Endothelial cell of umbilical vein (primary cell): ENCODE measurements at regions of chr4 and their contacts with region 1.

Region 1: DNA sequence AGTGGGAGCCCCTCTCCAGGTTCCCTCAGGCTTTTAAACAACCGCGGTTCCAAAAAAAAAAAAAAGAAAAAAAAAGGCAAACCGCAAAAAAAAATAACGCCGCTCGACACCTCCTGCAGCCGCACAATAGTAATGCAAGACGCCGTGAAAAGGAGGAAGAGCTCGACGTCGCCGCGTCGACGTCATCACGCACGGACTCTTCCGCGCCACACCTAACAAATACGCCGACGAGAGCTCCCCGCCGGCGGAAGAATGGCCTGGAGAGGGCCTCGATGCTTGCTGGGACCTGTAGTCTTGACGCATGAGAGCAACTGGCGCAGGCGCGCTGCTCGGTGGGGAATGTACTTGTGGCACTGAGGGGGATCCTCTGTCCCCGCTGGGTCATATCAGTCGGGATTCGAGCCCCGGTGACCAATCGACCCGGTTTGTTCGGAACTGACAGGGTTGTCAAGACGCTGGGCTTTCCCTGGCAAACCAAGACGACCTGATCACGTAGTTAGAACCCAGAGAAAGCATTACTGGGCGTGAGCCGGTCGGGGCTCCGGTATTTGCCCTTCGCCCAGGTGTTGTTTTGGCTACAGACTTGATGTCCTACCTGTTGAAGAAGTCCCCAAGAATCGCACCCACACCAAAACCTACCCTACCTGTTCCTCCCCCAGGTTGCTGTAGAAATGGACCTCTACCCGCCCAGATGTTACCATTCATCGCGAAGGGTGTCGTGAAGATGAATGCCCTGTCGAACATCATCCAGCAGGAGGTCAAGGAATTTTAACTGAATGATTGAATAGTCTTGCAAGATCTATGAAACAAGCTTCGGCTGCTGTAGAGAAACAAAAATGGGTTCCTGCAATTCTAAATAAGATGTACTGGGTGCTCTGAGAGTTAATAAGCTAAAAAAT is at the start of gene CBR4:
- DNase-seq: peak; percentile 99
- H3K4me3 ChIP-seq: peak within 1 kb of the TSS; percentile 49 to 91 (median 90)
- H3K27ac ChIP-seq: peak within 1 kb of the TSS; percentile 65
- H3K4me1 ChIP-seq: peaks cover 19% of the 10 kb centered on the region
- H3K27me3 ChIP-seq: no peaks in the 10 kb centered on the region
- CTCF ChIP-seq: peak; percentile 5 to 35
- POLR2A ChIP-seq: peak; percentile 91
- total RNA-seq, gene CBR4: 23.6 and 26.3 TPM in 2 replicates

Region 2: DNA sequence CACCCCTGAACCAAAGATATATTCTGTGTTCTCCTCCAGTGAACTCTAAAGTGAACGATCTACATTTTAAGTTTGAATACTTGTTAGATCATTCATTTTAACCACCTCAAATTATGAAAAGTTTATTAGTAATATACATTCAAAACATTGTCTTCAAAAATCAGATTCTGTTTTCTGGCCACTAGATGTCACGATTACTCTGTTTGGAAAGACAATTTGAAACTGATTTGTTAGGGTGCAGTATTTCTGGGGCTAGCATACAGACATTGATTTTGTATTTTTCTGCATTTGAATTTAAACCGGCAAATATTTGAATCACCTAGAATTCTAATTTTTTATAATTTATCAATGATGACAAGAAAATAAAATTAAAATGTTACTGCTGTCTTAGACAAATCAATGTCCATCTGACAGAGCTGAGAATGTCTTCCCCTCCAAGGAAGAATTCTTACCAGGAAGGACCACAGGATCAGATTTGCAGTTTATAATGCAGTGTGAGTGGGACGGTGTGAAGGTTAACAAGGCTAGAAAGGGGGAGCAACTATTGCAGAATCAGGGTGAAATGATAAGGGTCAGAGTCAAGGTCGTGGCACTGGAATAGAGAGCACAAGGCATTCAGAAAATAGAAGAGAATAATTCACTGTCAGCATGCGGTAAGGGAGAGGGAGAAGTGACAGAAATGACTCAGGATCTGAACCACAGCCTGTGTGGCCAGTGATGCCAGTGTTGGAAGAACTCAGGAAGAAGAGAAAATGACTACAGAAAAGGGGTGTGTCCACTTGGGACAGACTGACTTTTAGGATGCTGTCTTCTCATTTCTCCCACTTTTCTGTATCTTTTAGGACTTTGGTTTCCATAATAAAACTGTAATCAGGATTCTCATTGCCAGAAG is 826.4 kb before region 1 on chr4:
- CTCF ChIA-PET with region 1: interaction called, 3 read pairs
- POLR2A ChIA-PET with region 1: no interaction called
- dilution Hi-C with region 1: no loop called
- intact Hi-C with region 1: loop called (anchors 5 kb)
- DNase-seq: peak; percentile 65
- H3K4me3 ChIP-seq: no peak overlapping the region
- H3K27ac ChIP-seq: no peak overlapping the region
- H3K4me1 ChIP-seq: peaks cover 3% of the 10 kb centered on the region
- H3K27me3 ChIP-seq: no peaks in the 10 kb centered on the region
- CTCF ChIP-seq: peak; percentile 18 to 22
- POLR2A ChIP-seq: no peak

Region 3: GRCh38 chr4:168995537-168996295 is 14.7 kb before region 1 on chr4:
- CTCF ChIA-PET with region 1: interaction called, 14 read pairs
- POLR2A ChIA-PET with region 1: interaction called, 11 read pairs
- dilution Hi-C with region 1: no loop called
- intact Hi-C with region 1: loop called (anchors 2 kb)
- DNase-seq: peak; percentile 24
- H3K4me3 ChIP-seq: no peak overlapping the region
- H3K27ac ChIP-seq: no peak overlapping the region
- H3K4me1 ChIP-seq: no peaks in the 10 kb centered on the region
- H3K27me3 ChIP-seq: no peaks in the 10 kb centered on the region
- CTCF ChIP-seq: peak in 1 of 2 donors; percentile 3
- POLR2A ChIP-seq: no peak

Region 4: GRCh38 chr4:169099771-169100180 is 89.4 kb after region 1 on chr4:
- CTCF ChIA-PET with region 1: interaction called, 7 read pairs
- POLR2A ChIA-PET with region 1: interaction called, 13 read pairs
- dilution Hi-C with region 1: no loop called
- intact Hi-C with region 1: no loop called
- DNase-seq: peak; percentile 42
- H3K4me3 ChIP-seq: no peak overlapping the region
- H3K27ac ChIP-seq: peak overlapping the region; percentile 30
- H3K4me1 ChIP-seq: peaks cover 36% of the 10 kb centered on the region
- H3K27me3 ChIP-seq: no peaks in the 10 kb centered on the region
- CTCF ChIP-seq: no peak
- POLR2A ChIP-seq: no peak

Region 5: GRCh38 chr4:169270810-169271691 is 260.7 kb after region 1 on chr4 and contains the start of gene SH3RF1:
- CTCF ChIA-PET with region 1: interaction called, 5 read pairs
- POLR2A ChIA-PET with region 1: no interaction called
- dilution Hi-C with region 1: no loop called
- intact Hi-C with region 1: loop called (anchors 2 kb)
- DNase-seq: peak; percentile 88
- H3K4me3 ChIP-seq: peak within 1 kb of the TSS; percentile 63 to 99 (median 99)
- H3K27ac ChIP-seq: peak within 1 kb of the TSS; percentile 91
- H3K4me1 ChIP-seq: peaks cover 42% of the 10 kb centered on the region
- H3K27me3 ChIP-seq: no peaks in the 10 kb centered on the region
- CTCF ChIP-seq: no peak
- POLR2A ChIP-seq: peak; percentile 65
- total RNA-seq, gene SH3RF1: 24.3 and 24.9 TPM in 2 replicates

Region 6: DNA sequence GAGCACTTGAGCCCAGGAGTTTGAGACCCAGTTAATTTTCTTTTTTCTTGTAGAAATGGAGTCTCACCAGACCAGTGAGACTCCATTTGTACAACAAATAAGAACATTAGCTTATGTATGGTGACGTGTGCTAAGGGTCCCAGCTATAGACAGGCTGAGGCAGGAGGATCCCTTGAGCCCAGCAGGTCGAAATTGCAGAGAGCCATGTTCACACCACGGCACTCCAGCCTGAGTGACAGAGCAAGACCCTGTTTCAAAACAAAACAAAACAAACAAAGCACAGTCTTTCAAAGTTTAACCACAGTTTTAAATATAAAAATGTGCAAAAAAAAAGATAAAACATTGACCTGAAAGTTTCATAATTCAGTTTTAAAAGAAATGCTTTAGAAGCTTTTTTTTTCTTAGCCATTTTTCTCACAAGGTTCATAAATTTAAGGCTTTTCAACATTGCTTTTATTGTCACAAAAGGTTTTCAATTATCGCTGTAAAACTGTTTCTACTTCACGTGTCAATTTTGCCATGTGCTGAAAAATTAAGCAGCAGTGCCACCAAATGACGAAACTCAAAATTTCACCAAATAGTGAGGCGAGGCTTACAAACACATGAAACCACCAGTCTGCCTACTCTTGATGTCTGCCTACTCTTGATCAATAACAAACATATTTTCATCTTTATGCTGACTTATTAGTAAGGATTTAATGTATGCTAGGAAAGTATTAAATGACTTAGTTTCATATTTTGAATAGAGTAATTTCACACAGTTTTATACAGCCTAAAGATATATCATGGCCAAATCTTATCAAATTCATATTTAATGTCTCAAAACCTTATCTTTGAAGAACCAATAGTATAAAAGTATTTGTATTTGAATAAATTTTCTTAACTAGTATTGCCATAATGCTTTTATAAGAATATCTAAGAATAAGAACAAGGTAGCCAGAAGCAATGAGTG is 475.7 kb after region 1 on chr4:
- CTCF ChIA-PET with region 1: interaction called, 20 read pairs
- POLR2A ChIA-PET with region 1: interaction called, 7 read pairs
- dilution Hi-C with region 1: no loop called
- intact Hi-C with region 1: loop called (anchors 1 kb)
- DNase-seq: peak; percentile 78
- H3K4me3 ChIP-seq: no peak overlapping the region
- H3K27ac ChIP-seq: no peak overlapping the region
- H3K4me1 ChIP-seq: peaks cover 3% of the 10 kb centered on the region
- H3K27me3 ChIP-seq: no peaks in the 10 kb centered on the region
- CTCF ChIP-seq: peak; percentile 39 to 52
- POLR2A ChIP-seq: no peak

Region 7: DNA sequence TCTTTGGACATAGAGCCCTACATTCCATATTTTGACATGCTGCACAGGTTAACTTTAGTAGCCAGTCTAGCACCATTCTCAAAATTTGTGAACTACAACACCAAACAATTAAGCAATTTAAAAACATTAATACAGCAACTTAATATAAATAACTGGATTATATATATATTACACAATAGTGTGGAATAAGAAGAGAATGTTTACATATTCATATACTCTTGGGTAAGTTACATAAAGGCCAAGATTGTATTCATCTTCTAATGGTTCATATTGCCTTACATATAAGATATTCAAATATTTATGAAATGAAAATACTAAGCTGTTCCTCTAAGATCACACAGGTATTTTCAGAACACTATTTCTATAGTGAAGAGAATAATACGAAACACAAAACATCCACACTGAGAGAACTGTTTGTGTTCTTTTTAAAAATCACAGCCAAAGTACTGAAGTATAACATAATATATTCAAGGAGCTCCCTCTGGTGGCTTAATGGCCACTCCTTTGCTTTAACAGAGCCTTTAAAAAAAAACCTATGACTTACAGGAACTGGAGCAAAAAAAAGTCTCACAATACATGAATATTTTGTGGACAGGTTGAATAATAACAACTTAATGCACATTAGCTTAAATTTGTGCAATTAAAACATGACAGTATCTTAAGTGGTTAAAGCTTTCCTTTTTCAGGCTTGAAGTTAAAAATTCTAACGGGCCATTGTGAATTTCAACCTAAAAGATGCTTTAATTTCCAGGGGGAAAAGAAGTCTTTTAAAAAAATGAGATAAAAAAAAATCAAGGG is 555.8 kb after region 1 on chr4:
- CTCF ChIA-PET with region 1: interaction called, 5 read pairs
- POLR2A ChIA-PET with region 1: no interaction called
- dilution Hi-C with region 1: no loop called
- intact Hi-C with region 1: loop called (anchors 5 kb)
- DNase-seq: peak; percentile 80
- H3K4me3 ChIP-seq: no peak overlapping the region
- H3K27ac ChIP-seq: no peak overlapping the region
- H3K4me1 ChIP-seq: no peaks in the 10 kb centered on the region
- H3K27me3 ChIP-seq: no peaks in the 10 kb centered on the region
- CTCF ChIP-seq: peak; percentile 50
- POLR2A ChIP-seq: no peak

Region 8: GRCh38 chr4:169604131-169604900 is 593.9 kb after region 1 on chr4:
- CTCF ChIA-PET with region 1: no interaction called
- POLR2A ChIA-PET with region 1: no interaction called
- dilution Hi-C with region 1: no loop called
- intact Hi-C with region 1: no loop called
- DNase-seq: peak; percentile 31
- H3K4me3 ChIP-seq: no peak overlapping the region
- H3K27ac ChIP-seq: no peak overlapping the region
- H3K4me1 ChIP-seq: peaks cover 4% of the 10 kb centered on the region
- H3K27me3 ChIP-seq: no peaks in the 10 kb centered on the region
- CTCF ChIP-seq: no peak
- POLR2A ChIP-seq: no peak